Endothelial cell of umbilical vein (primary cell): ENCODE measurements at regions of chr7 and their contacts with region 1.

Region 1: GRCh38 chr7:131497454-131497853 is 59.0 kb downstream of the PODXL start:
- DNase-seq: no peak
- H3K4me3 ChIP-seq: no peak overlapping the region
- H3K27ac ChIP-seq: no peak overlapping the region
- H3K4me1 ChIP-seq: no peaks in the 10 kb centered on the region
- H3K27me3 ChIP-seq: no peaks in the 10 kb centered on the region
- CTCF ChIP-seq: no peak
- POLR2A ChIP-seq: no peak

Region 2: GRCh38 chr7:131604841-131605279 is 107.4 kb after region 1 on chr7:
- CTCF ChIA-PET with region 1: no interaction called
- POLR2A ChIA-PET with region 1: interaction called, 10 read pairs
- dilution Hi-C with region 1: no loop called
- intact Hi-C with region 1: no loop called
- DNase-seq: no peak
- H3K4me3 ChIP-seq: no peak overlapping the region
- H3K27ac ChIP-seq: no peak overlapping the region
- H3K4me1 ChIP-seq: no peaks in the 10 kb centered on the region
- H3K27me3 ChIP-seq: peaks cover 0 to 7% of the 10 kb centered on the region in 2 experiments
- CTCF ChIP-seq: no peak
- POLR2A ChIP-seq: no peak

Region 3: GRCh38 chr7:132154248-132154647 is 656.8 kb after region 1 on chr7:
- CTCF ChIA-PET with region 1: no interaction called
- POLR2A ChIA-PET with region 1: no interaction called
- dilution Hi-C with region 1: no loop called
- intact Hi-C with region 1: no loop called
- DNase-seq: no peak
- H3K4me3 ChIP-seq: no peak overlapping the region
- H3K27ac ChIP-seq: no peak overlapping the region
- H3K4me1 ChIP-seq: no peaks in the 10 kb centered on the region
- H3K27me3 ChIP-seq: no peaks in the 10 kb centered on the region
- CTCF ChIP-seq: no peak
- POLR2A ChIP-seq: no peak